ENCODE measurements at regions of chr11 and their contacts with region 1.

Region 1: GRCh38 chr11:1572197-1573076 is at the start of gene DUSP8:
- DNase-seq: peak; percentile 91 to 97 (median 94)
- ATAC-seq: peak; percentile 74
- H3K4me3 ChIP-seq: peak within 1 kb of the TSS; percentile 63
- H3K4me3 Mint-ChIP-seq: peak within 1 kb of the TSS; percentile 7 to 87 (median 82)
- H3K27ac ChIP-seq: peak within 1 kb of the TSS; percentile 90
- H3K27ac Mint-ChIP-seq: peak within 1 kb of the TSS in 7 of 9 donors; percentile 43 to 91 (median 84)
- H3K4me1 ChIP-seq: peaks cover 25 to 32% of the 10 kb centered on the region in 2 donors
- H3K4me1 Mint-ChIP-seq: peaks cover 2 to 22% (median 9%) of the 10 kb centered on the region in 7 donors
- H3K27me3 ChIP-seq: no peaks in the 10 kb centered on the region
- H3K27me3 Mint-ChIP-seq: peaks cover 0 to 41% (median 3%) of the 10 kb centered on the region in 5 donors
- total RNA-seq, gene DUSP8: 0.41 to 79.3 (median 4.4) TPM

Region 2: DNA sequence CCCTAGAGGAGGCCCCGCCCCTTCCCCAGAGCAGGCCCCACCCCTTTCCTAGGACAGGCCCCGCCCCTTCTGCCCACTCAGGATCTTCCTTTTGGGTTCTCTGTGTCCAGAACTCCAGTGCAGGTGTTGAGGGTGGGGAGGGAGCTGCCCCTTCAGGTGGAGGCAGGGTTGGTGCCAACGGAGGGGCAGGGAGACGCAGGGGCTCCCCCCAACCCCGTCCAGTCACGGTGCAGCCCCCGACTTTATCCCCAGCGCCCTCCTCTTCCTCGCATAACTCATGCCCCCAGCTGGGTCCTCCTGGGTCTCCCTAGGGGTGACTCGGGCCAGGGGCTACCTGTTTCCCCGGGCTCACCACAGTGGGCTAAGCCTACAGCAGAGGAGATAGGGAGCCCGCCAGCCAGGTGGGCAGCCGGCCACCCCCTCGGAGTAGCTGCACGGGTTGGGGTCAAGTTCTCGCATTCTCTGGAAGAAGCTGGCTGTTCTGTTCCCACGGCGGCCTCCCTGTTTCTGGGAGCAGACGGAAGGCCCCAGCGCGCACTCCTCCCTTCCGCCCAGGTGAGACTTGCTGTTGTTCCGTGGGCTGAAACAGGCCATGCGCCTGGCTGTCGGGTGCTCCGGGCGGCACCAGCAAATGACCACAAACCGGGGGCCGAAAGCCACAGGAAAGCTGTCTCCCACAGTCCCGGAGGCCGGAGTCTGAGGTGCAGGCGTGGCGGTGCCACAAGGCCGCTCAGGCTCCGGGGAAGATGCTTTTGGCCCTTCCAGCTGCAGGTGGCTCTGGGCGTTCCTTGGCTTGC is 458.8 kb before region 1 on chr11:
- CTCF ChIA-PET with region 1: interaction called, 4 read pairs
- POLR2A ChIA-PET with region 1: no interaction called
- intact Hi-C with region 1: loop called in 1 of 2 experiments (anchors 2 kb)
- DNase-seq: no peak
- ATAC-seq: no peak
- H3K4me3 ChIP-seq: no peak overlapping the region
- H3K4me3 Mint-ChIP-seq: no peak overlapping the region
- H3K27ac ChIP-seq: no peak overlapping the region
- H3K27ac Mint-ChIP-seq: no peak overlapping the region
- H3K4me1 ChIP-seq: no peaks in the 10 kb centered on the region
- H3K4me1 Mint-ChIP-seq: peaks cover 0 to 6% (median 0%) of the 10 kb centered on the region in 7 donors
- H3K27me3 ChIP-seq: no peaks in the 10 kb centered on the region
- H3K27me3 Mint-ChIP-seq: no peaks in the 10 kb centered on the region

Region 3: DNA sequence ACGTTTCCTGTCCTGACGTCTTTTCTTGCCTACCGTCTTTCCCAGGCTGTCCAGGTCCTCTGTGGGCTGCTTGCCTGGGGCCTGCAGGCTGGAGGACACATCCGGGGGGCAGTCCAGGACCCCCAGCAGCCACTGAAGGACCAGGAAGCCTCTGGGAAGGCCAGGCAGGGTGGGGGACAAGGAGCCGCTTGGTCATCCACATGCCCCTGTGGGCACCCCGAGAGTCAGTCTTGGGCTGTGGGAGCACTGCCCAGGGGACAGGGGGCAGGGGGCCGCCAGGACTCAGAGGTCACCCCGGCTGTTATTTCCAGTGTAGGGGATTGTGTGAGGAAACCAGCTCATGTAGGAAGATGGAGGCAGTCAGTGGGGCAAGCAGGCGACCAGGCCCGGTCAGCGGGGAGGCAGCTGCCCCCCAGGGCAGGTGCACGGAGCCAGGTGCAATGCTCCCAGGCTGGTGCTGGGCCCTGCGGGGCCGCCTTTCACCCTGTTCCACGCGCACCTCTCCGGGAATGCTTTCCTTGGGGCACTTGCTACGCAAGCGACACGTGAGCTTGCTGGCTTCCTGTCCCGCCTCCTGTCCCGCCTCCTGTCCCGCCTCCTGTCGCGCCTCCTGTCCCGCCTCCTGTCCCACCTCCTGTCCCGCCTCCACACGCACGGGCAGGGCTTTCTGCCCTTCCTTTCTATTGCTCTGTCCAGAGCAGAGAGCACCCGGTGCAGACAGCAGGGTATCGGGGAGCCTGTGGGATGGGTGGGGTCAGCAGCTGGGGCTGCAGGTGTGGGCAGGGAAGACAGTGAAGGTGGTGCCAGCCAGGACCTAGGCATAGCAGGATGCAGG is 310.0 kb before region 1 on chr11:
- CTCF ChIA-PET with region 1: interaction called, 3 read pairs
- POLR2A ChIA-PET with region 1: interaction called, 4 read pairs
- intact Hi-C with region 1: loop called (anchors 1 to 2 kb)
- DNase-seq: peak; percentile 72 to 91 (median 84)
- ATAC-seq: peak; percentile 93
- H3K4me3 ChIP-seq: peak overlapping the region; percentile 77
- H3K4me3 Mint-ChIP-seq: peak overlapping the region; percentile 74 to 90 (median 85)
- H3K27ac ChIP-seq: peak overlapping the region; percentile 89
- H3K27ac Mint-ChIP-seq: peak overlapping the region; percentile 78 to 95 (median 91)
- H3K4me1 ChIP-seq: peaks cover 13 to 15% of the 10 kb centered on the region in 2 donors
- H3K4me1 Mint-ChIP-seq: peaks cover 0 to 34% (median 12%) of the 10 kb centered on the region in 7 donors
- H3K27me3 ChIP-seq: no peaks in the 10 kb centered on the region
- H3K27me3 Mint-ChIP-seq: no peaks in the 10 kb centered on the region

Region 4: DNA sequence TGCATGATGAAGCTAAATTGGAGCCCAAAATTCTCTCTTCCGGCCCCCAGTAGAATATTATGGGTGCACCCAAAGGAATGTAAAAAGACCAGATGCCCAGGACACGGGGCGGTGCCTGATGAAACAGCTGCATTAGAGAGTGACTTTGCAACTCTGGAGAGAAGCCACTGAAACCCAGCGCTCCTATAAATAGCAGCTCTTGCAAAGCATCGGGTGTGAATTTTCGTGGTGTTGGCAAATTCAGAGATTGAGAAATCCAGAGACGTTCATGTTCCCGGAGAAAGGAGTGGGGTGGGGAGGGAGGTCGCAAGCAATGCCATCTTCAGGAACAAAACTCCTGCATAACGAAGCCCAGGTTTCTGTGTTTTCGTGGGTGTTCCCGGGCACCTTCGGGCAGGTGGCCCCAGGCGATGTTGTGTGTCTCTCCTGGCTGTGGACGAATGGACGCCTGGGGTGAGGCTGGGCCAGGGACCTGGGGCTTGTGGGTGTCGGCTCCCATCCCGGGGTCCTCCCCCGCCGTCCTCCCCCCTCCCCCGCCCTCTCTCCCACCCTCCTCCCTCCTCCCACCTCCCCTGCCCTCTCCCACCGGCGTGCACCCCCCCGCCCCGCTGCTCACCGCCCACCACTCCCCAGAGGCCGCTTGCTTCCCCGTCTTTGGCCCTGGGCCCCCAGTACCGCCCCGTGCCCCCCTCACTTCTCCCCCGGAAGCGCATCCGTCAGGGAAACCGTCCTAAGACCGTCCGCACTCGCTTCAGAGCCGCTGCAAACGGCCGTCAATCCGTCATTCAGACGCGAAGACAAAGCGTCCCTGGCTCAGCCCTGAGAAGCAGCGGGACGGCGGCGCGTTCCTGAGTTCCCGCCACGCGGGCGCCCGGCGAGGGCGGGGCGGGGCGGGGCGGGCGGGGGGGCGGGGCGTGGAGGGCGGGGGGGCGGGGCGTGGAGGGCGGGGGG is 236.4 kb before region 1 on chr11:
- CTCF ChIA-PET with region 1: interaction called, 5 read pairs
- POLR2A ChIA-PET with region 1: no interaction called
- intact Hi-C with region 1: loop called in 1 of 2 experiments (anchors 5 kb)
- DNase-seq: peak; percentile 40 to 64 (median 61)
- ATAC-seq: peak; percentile 73
- H3K4me3 ChIP-seq: peak overlapping the region; percentile 59
- H3K4me3 Mint-ChIP-seq: peak overlapping the region; percentile 76 to 89 (median 82)
- H3K27ac ChIP-seq: peak overlapping the region; percentile 45
- H3K27ac Mint-ChIP-seq: peak overlapping the region; percentile 40 to 89 (median 62)
- H3K4me1 ChIP-seq: peaks cover 10% of the 10 kb centered on the region in 2 donors
- H3K4me1 Mint-ChIP-seq: peaks cover 15 to 22% (median 17%) of the 10 kb centered on the region in 7 donors
- H3K27me3 ChIP-seq: no peaks in the 10 kb centered on the region
- H3K27me3 Mint-ChIP-seq: peaks cover 0 to 20% (median 0%) of the 10 kb centered on the region in 5 donors

Region 5: DNA sequence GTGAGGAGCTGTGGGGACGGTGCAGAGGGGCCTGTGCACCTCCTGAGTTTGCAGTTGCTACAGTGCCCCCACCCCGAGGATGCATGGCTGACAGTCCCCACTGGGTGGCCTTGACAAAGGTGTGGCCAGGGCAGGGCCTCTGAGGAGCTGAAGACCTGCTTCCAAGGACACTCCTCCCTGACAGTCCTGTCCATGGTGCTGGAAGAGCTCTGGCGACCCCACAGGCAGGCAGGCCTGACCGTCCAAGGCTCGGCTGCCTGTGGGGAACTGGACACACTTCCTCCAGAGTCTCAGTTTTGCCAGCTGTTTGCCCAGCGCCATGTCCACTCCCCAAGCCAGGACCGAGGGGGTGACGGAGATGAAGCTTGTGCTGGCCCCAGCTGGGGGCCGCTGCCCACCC is 150.0 kb before region 1 on chr11:
- CTCF ChIA-PET with region 1: no interaction called
- POLR2A ChIA-PET with region 1: no interaction called
- intact Hi-C with region 1: no loop called
- DNase-seq: no peak
- ATAC-seq: peak; percentile 6
- H3K4me3 ChIP-seq: no peak overlapping the region
- H3K4me3 Mint-ChIP-seq: no peak overlapping the region
- H3K27ac ChIP-seq: no peak overlapping the region
- H3K27ac Mint-ChIP-seq: no peak overlapping the region
- H3K4me1 ChIP-seq: no peaks in the 10 kb centered on the region
- H3K4me1 Mint-ChIP-seq: no peaks in the 10 kb centered on the region
- H3K27me3 ChIP-seq: no peaks in the 10 kb centered on the region
- H3K27me3 Mint-ChIP-seq: no peaks in the 10 kb centered on the region

Region 6: GRCh38 chr11:1453611-1454034 is 118.8 kb before region 1 on chr11:
- CTCF ChIA-PET with region 1: interaction called, 3 read pairs
- POLR2A ChIA-PET with region 1: interaction called, 4 read pairs
- intact Hi-C with region 1: loop called (anchors 1 kb)
- DNase-seq: peak in 7 of 9 donors; percentile 12 to 52 (median 34)
- ATAC-seq: peak; percentile 45
- H3K4me3 ChIP-seq: no peak overlapping the region
- H3K4me3 Mint-ChIP-seq: no peak overlapping the region
- H3K27ac ChIP-seq: no peak overlapping the region
- H3K27ac Mint-ChIP-seq: no peak overlapping the region
- H3K4me1 ChIP-seq: no peaks in the 10 kb centered on the region
- H3K4me1 Mint-ChIP-seq: peaks cover 0 to 1% (median 0%) of the 10 kb centered on the region in 7 donors
- H3K27me3 ChIP-seq: no peaks in the 10 kb centered on the region
- H3K27me3 Mint-ChIP-seq: no peaks in the 10 kb centered on the region

Region 7: GRCh38 chr11:1546536-1547400 is 25.7 kb before region 1 on chr11:
- CTCF ChIA-PET with region 1: interaction called, 30 read pairs
- POLR2A ChIA-PET with region 1: interaction called, 21 read pairs
- intact Hi-C with region 1: loop called (anchors 1 kb)
- DNase-seq: peak in 6 of 9 donors; percentile 46 to 65 (median 55)
- ATAC-seq: peak; percentile 79
- H3K4me3 ChIP-seq: no peak overlapping the region
- H3K4me3 Mint-ChIP-seq: peak overlapping the region in 7 of 10 donors; percentile 10 to 73 (median 37)
- H3K27ac ChIP-seq: no peak overlapping the region
- H3K27ac Mint-ChIP-seq: no peak overlapping the region
- H3K4me1 ChIP-seq: peaks cover 2 to 17% of the 10 kb centered on the region in 2 donors
- H3K4me1 Mint-ChIP-seq: peaks cover 0 to 9% (median 0%) of the 10 kb centered on the region in 7 donors
- H3K27me3 ChIP-seq: peaks cover 0 to 11% of the 10 kb centered on the region in 2 donors
- H3K27me3 Mint-ChIP-seq: peaks cover 14 to 50% (median 20%) of the 10 kb centered on the region in 5 donors

Region 8: GRCh38 chr11:1628506-1629325 is 56.3 kb after region 1 on chr11:
- CTCF ChIA-PET with region 1: no interaction called
- POLR2A ChIA-PET with region 1: no interaction called
- intact Hi-C with region 1: loop called in 1 of 2 experiments (anchors 2 kb)
- DNase-seq: peak; percentile 27 to 66 (median 52)
- ATAC-seq: peak; percentile 91
- H3K4me3 ChIP-seq: no peak overlapping the region
- H3K4me3 Mint-ChIP-seq: peak overlapping the region in 2 of 10 donors; percentile 4 to 29
- H3K27ac ChIP-seq: no peak overlapping the region
- H3K27ac Mint-ChIP-seq: no peak overlapping the region
- H3K4me1 ChIP-seq: peaks cover 0 to 7% of the 10 kb centered on the region in 2 donors
- H3K4me1 Mint-ChIP-seq: peaks cover 0 to 17% (median 4%) of the 10 kb centered on the region in 7 donors
- H3K27me3 ChIP-seq: no peaks in the 10 kb centered on the region
- H3K27me3 Mint-ChIP-seq: peaks cover 14 to 19% (median 16%) of the 10 kb centered on the region in 5 donors

Region 9: GRCh38 chr11:1659506-1659905 is 87.1 kb after region 1 on chr11:
- CTCF ChIA-PET with region 1: no interaction called
- POLR2A ChIA-PET with region 1: no interaction called
- intact Hi-C with region 1: no loop called
- DNase-seq: peak in 3 of 9 donors; percentile 10 to 18 (median 12)
- ATAC-seq: no peak
- H3K4me3 ChIP-seq: no peak overlapping the region
- H3K4me3 Mint-ChIP-seq: peak overlapping the region in 8 of 10 donors; percentile 14 to 62 (median 40)
- H3K27ac ChIP-seq: no peak overlapping the region
- H3K27ac Mint-ChIP-seq: peak overlapping the region in 4 of 9 donors; percentile 8 to 65 (median 54)
- H3K4me1 ChIP-seq: peaks cover 0 to 5% of the 10 kb centered on the region in 2 donors
- H3K4me1 Mint-ChIP-seq: peaks cover 4 to 26% (median 14%) of the 10 kb centered on the region in 7 donors
- H3K27me3 ChIP-seq: no peaks in the 10 kb centered on the region
- H3K27me3 Mint-ChIP-seq: peaks cover 13 to 30% (median 20%) of the 10 kb centered on the region in 5 donors

Measured in naive thymus-derived CD4-positive, alpha-beta T cell (primary cell).